ENCODE measurements at regions of chr2 and their contacts with region 1.

Region 1: DNA sequence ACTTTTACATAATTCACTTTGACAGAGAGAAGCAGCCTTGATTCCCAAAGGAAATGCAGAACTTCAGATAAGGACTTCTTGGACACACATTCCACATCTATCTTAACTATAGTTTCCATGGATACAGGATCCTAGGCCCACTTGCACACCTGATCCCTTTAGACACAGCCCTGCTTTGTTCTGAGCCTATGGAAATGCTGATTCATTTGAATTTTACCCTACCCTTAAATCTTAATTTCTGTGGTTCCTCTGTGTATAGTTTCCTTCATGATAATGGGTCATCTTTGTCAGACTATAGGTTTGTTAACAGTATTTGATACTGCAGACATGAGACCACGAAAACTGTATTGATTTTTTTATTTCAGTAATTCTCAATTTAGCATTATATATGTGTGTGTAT is 77.4 kb downstream of the ACTR3 start:
- DNase-seq: no peak
- ATAC-seq: no peak
- H3K4me3 Mint-ChIP-seq: no peak overlapping the region
- H3K27ac Mint-ChIP-seq: peak overlapping the region; percentile 35
- H3K4me1 Mint-ChIP-seq: peaks cover 2% of the 10 kb centered on the region
- H3K27me3 Mint-ChIP-seq: no peaks in the 10 kb centered on the region

Region 2: DNA sequence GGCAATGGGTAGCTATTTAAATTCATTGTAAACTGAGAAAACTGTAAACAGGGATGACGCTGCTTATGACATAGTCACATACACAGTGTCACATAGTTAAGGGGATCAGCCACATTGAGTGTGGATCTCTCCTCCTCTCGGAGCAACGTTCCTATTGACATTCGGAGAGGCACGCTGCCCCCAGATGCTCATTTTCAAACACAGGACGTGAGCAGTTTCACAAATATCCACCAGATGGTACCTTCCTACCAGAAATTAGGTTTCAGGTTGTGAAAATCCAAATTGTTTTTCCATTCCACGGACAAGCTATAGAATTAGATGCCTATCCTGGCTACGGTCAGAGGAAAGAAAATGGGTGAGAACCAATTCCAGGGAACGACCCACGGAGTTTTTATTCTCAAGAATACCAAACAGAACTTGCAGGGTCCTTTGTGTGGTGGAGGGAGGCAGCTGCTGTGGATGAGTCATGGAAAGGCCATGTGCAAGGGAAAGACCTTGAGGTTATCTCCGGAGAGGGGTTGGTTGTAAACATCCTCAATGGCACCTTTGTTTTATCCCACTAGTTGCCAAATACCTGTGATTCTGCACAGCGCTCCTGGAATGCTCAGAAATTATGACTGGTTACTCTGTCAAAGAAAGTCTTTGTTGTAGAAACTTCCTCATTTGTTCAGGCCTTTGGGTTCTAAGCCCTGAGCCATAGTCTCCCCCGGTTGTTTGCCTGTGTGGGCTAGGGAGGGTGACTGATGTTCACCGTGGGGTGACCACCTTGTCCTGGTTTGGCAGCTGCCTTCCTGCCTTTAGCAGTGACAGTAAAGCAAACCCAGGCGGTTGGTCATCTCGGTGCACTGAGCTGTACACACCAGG is 10.6 kb after region 1 on chr2:
- CTCF ChIA-PET with region 1: interaction called, 20 read pairs
- DNase-seq: peak; percentile 41
- ATAC-seq: no peak
- H3K4me3 Mint-ChIP-seq: no peak overlapping the region
- H3K27ac Mint-ChIP-seq: peak overlapping the region; percentile 18
- H3K4me1 Mint-ChIP-seq: peaks cover 8% of the 10 kb centered on the region
- H3K27me3 Mint-ChIP-seq: no peaks in the 10 kb centered on the region